ENCODE measurements at regions of chr7 and their contacts with region 1.

Region 1: GRCh38 chr7:95476904-95477594 is 8.7 kb upstream of the ASB4 start:
- DNase-seq: peak; percentile 37
- CTCF ChIP-seq: peak; percentile 76

Region 2: DNA sequence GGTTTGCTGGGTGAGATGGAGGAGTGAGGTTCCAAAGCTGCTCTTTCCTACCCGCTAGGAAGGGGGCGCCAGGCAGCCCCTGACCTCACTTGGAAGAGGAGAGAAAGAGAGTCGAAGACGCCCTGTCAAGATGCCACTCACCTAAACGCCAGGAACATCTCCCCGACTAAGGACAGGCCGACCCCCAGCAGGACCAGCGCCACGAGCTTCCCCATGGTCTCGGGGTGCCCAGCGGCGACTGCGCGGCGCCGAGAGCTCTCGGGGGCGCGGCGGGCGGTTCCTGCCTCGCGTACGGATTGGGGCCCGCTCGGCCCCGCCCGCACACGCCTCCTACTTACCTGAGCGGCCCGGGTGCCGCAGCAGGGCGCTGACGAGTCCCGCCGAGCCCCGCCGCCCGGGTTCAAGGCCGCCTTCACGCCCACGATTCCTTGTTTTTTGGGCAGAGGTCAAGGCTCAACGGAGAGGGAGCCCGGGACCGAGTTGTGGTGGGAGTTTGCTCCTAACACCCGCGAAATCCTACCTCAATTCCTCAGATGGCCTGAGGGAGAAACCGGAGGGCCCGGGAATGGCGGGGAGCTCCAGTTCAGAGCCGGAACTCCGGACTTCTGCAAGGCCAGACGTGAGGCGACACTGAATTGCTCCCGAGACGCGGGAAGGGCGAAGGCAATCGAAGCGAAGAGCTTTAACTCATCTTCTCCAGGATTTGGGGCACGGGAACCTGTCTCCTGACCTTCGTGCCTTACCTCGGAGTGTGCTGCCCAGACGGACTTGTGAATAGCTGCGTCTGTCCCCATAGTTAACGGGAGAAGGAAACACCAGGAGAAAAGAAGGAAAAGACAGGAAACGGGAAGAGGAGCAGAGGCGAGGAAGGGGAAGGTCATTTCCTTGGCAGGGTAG is 80.7 kb before region 1 on chr7 and contains the start of gene PON3:
- CTCF ChIA-PET with region 1: interaction called, 12 read pairs
- POLR2A ChIA-PET with region 1: no interaction called
- DNase-seq: peak; percentile 15
- CTCF ChIP-seq: peak; percentile 16

Region 3: DNA sequence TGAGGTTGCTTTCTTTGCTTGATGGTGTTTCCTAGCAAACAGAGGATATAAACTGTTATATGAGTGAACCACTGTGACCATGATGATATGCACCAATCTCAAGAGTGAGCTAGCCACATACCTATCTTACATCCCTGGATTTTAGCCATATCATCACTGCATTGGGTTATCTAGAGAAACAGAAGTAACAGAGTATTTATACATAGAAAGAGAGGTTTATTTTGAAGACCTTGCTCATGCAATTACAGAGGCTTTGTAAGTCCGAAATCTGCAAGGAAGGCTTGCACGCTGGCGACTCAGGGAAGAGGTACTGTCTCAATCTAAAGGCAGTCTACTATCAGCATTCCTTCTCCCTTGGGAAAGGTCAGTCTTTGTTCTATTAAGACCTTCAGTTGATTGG is 30.4 kb before region 1 on chr7:
- CTCF ChIA-PET with region 1: interaction called, 10 read pairs
- POLR2A ChIA-PET with region 1: no interaction called
- DNase-seq: no peak
- CTCF ChIP-seq: no peak

Region 4: DNA sequence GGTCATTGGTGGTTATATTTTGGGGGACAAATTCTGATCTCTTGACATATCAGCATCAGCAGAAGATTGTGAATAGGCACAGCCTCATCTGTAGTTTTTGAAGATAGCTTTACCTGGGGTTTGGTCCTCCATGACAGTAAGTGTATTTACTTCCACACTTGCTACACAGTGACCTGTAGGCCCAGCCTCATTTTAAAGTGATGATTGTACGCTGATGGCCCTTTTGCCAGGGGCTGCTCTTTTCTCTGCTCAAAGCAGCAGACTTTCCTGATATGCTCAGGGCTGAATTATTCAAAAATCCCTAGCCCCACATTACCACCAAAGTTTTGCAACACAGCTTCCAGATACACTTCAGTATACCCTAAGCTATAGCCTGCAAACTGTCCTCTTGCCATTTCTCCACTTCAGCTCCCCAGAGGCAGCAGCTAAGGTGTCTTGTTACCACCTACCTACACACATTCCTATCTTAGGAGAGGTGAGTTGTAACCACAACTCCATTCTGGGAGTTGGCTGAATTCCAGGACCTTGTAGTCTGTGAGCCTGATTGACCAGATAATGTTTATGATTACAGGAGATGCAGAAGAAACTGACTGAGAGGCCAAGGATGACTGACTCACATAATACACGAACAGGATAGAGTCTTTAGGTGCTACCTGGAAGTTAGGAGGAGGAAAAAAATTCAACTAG is 14.7 kb after region 1 on chr7:
- CTCF ChIA-PET with region 1: interaction called, 153 read pairs
- POLR2A ChIA-PET with region 1: no interaction called
- DNase-seq: no peak
- CTCF ChIP-seq: no peak

Measured in GM10248 (cell line).